ENCODE measurements at regions of chr7 and their contacts with region 1.

Region 1: GRCh38 chr7:149071641-149072437 is 18.7 kb downstream of the ZNF786 start:
- DNase-seq: peak; percentile 19 to 74 (median 49)
- ATAC-seq: peak; percentile 73
- H3K4me3 ChIP-seq: no peak overlapping the region
- H3K4me3 Mint-ChIP-seq: no peak overlapping the region
- H3K27ac ChIP-seq: peak overlapping the region; percentile 42 to 63
- H3K27ac Mint-ChIP-seq: peak overlapping the region; percentile 77
- H3K4me1 ChIP-seq: no peaks in the 10 kb centered on the region
- H3K4me1 Mint-ChIP-seq: peaks cover 3% of the 10 kb centered on the region
- H3K27me3 ChIP-seq: no peaks in the 10 kb centered on the region
- H3K27me3 Mint-ChIP-seq: no peaks in the 10 kb centered on the region
- CTCF ChIP-seq: no peak

Region 2: DNA sequence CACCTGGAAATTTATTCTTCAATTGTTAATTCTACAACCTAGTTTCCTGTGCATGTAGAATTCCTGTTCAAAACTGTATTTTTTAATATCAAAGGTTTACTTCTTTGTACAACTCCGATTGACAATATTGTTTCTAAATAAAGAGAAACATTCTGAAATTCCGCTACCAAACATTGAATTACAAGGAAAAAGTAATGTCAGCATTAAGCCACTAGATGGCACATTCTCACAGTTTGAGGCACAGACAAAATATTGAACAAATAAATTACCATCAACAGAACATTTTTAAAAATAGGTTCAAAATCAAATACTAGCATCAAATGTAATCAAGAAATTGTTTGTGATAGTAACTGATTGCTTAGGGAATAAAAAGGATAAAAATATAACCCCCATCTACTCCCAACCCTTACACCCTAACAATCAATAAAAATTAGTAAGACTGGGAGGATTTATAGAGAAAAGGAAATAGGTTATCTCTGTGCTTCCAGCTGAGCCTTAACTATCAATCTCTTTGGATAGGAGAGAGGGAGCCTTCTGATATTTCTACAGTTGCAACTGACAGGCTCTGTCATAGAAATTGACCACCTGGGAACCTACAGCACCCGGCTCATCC is 567.9 kb before region 1 on chr7:
- CTCF ChIA-PET with region 1: no interaction called
- POLR2A ChIA-PET with region 1: no interaction called
- intact Hi-C with region 1: loop called (anchors 5 to 10 kb)
- DNase-seq: peak in 3 of 9 experiments; percentile 7 to 62 (median 52)
- ATAC-seq: no peak
- H3K4me3 ChIP-seq: no peak overlapping the region
- H3K4me3 Mint-ChIP-seq: no peak overlapping the region
- H3K27ac ChIP-seq: no peak overlapping the region
- H3K27ac Mint-ChIP-seq: no peak overlapping the region
- H3K4me1 ChIP-seq: no peaks in the 10 kb centered on the region
- H3K4me1 Mint-ChIP-seq: no peaks in the 10 kb centered on the region
- H3K27me3 ChIP-seq: no peaks in the 10 kb centered on the region
- H3K27me3 Mint-ChIP-seq: peaks cover 12% of the 10 kb centered on the region
- CTCF ChIP-seq: peak; percentile 92

Region 3: DNA sequence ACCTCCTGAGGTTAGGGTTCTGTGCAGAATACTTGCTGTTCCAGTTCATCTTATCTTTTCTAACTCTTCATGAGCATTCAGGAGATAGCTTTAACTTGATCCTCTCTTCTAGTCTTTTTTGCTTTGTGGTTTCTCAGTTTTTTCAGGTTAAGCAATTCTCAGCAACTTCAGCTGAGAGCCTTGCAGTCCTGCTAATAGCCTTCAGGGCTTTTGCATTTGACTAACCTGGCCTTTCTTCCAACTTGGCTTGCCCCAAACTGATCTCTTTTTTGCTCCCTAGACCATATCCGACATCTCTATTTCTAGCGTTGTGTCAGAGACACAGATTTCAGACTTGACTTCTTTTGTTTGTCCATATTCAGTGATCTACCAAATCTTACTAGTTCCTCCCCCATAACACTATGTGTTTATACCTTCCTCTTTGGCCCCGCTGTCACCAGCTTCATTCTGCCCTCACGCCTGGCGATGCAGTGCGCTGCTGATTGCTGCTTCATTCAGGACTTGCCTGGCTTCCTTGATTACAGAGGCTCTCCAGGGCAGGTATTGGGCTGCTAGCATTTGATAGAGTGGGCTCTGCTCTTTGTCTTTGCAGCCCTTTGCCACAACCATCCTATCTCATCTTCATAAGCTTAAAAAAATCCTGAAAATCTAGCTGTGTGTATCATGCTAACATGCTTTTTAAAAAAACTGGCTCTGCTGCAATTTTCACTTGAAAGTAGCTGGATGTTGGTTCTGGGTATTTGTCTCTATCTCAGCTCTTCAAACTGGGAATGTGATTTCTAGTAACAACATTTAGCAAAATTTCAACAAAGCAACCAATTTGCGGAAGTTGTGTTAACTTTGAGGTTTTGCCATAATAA is 363.6 kb before region 1 on chr7:
- CTCF ChIA-PET with region 1: no interaction called
- POLR2A ChIA-PET with region 1: no interaction called
- intact Hi-C with region 1: loop called in 1 of 2 experiments (anchors 5 kb)
- DNase-seq: peak in 2 of 9 experiments; percentile 20 to 25
- ATAC-seq: no peak
- H3K4me3 ChIP-seq: no peak overlapping the region
- H3K4me3 Mint-ChIP-seq: peak overlapping the region; percentile 1
- H3K27ac ChIP-seq: peak overlapping the region in 1 of 2 experiments; percentile 21
- H3K27ac Mint-ChIP-seq: peak overlapping the region; percentile 2
- H3K4me1 ChIP-seq: peaks cover 64% of the 10 kb centered on the region
- H3K4me1 Mint-ChIP-seq: peaks cover 84% of the 10 kb centered on the region
- H3K27me3 ChIP-seq: no peaks in the 10 kb centered on the region
- H3K27me3 Mint-ChIP-seq: no peaks in the 10 kb centered on the region
- CTCF ChIP-seq: no peak